IMR-90 (cell line): ENCODE measurements at regions of chr10 and their contacts with region 1.

Region 1: DNA sequence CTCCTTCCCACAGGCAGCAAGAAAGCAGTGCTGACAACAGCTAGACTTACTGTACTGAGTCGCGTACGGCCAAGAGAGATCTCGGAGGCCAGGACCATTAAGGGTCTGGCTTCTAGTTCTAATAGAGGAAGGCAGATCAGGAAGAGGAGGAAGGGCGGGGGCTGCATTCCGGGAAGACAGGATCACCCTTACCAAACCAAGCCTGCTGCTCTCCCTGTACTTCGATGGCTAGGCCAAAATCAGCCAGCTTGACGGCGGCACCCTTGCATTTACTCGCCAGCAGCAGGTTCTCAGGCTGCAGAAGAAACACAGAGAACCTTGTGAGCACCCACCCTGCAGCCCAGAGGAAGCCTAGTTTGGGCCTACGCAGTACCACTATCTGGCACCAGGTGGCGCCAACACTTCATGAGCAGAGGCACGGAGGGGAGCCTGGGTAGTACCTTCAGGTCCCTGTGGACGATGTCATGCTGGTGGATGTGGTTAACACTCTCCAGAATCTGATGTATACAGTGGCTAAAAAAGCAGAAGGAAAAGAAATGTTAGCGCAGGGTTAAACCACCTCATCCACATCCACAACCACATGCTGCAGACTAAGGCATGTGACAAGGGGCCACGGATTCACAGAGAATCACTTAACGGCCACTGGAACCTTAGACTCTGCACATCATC is 25.4 kb downstream of the CAMK2G start:
- DNase-seq: peak; percentile 78
- ATAC-seq: peak; percentile 98
- H3K4me3 ChIP-seq: no peak overlapping the region
- H3K27ac ChIP-seq: no peak overlapping the region
- H3K4me1 ChIP-seq: peaks cover 4% of the 10 kb centered on the region; the same call in 1 of the 2 replicates
- H3K27me3 ChIP-seq: no peaks in the 10 kb centered on the region
- CTCF ChIP-seq: peak; percentile 94
- POLR2A ChIP-seq: no peak
- RAD21 ChIP-seq: peak; percentile 92

Region 2: GRCh38 chr10:73940634-73941221 is 91.8 kb after region 1 on chr10:
- CTCF ChIA-PET with region 1: interaction called, 4 read pairs
- POLR2A ChIA-PET with region 1: no interaction called
- dilution Hi-C with region 1: no loop called
- in situ Hi-C with region 1: no loop called
- intact Hi-C with region 1: loop called (anchors 1 kb)
- DNase-seq: peak; percentile 49
- ATAC-seq: peak; percentile 97
- H3K4me3 ChIP-seq: no peak overlapping the region
- H3K27ac ChIP-seq: peak overlapping the region; percentile 54
- H3K4me1 ChIP-seq: peaks cover 13% of the 10 kb centered on the region
- H3K27me3 ChIP-seq: no peaks in the 10 kb centered on the region
- CTCF ChIP-seq: peak; percentile 84
- POLR2A ChIP-seq: no peak
- RAD21 ChIP-seq: peak; percentile 92